ENCODE measurements at regions of chr7 and their contacts with region 1.

Region 1: GRCh38 chr7:117597755-117598154 is 117.9 kb downstream of the CFTR start:
- DNase-seq: no peak
- H3K4me3 ChIP-seq: no peak overlapping the region
- H3K27ac ChIP-seq: no peak overlapping the region
- H3K4me1 ChIP-seq: no peaks in the 10 kb centered on the region
- H3K27me3 ChIP-seq: no peaks in the 10 kb centered on the region
- CTCF ChIP-seq: no peak
- POLR2A ChIP-seq: no peak

Region 2: GRCh38 chr7:116021237-116021636 is 1576.5 kb before region 1 on chr7:
- intact Hi-C with region 1: no loop called
- DNase-seq: no peak
- H3K4me3 ChIP-seq: no peak overlapping the region
- H3K27ac ChIP-seq: no peak overlapping the region
- H3K4me1 ChIP-seq: no peaks in the 10 kb centered on the region
- H3K27me3 ChIP-seq: no peaks in the 10 kb centered on the region
- CTCF ChIP-seq: no peak
- POLR2A ChIP-seq: no peak

Region 3: GRCh38 chr7:118511146-118511545 is 913.4 kb after region 1 on chr7:
- intact Hi-C with region 1: loop called (anchors 5 kb)
- DNase-seq: no peak
- H3K4me3 ChIP-seq: no peak overlapping the region
- H3K27ac ChIP-seq: no peak overlapping the region
- H3K4me1 ChIP-seq: no peaks in the 10 kb centered on the region
- H3K27me3 ChIP-seq: no peaks in the 10 kb centered on the region
- CTCF ChIP-seq: no peak
- POLR2A ChIP-seq: no peak

Measured in breast epithelium (tissue), 4 donors.